Activated naive CD4-positive, alpha-beta T cell treated with anti-CD3 and anti-CD28 coated beads for 36 hours (primary cell): ENCODE measurements at regions of chr2 and their contacts with region 1.

Region 1: GRCh38 chr2:64036034-64036705 is 16.9 kb upstream of the VPS54 start:
- DNase-seq: peak; percentile 37
- H3K4me3 Mint-ChIP-seq: peak overlapping the region; percentile 25
- H3K27ac Mint-ChIP-seq: peak overlapping the region; percentile 70
- H3K4me1 Mint-ChIP-seq: peaks cover 50% of the 10 kb centered on the region
- H3K27me3 Mint-ChIP-seq: no peaks in the 10 kb centered on the region

Region 2: GRCh38 chr2:62306751-62307468 is 1729.3 kb before region 1 on chr2:
- CTCF ChIA-PET with region 1: no interaction called
- intact Hi-C with region 1: loop called (anchors 10 kb)
- DNase-seq: peak; percentile 73
- H3K4me3 Mint-ChIP-seq: no peak overlapping the region
- H3K27ac Mint-ChIP-seq: peak overlapping the region; percentile 90
- H3K4me1 Mint-ChIP-seq: peaks cover 74% of the 10 kb centered on the region
- H3K27me3 Mint-ChIP-seq: no peaks in the 10 kb centered on the region

Region 3: DNA sequence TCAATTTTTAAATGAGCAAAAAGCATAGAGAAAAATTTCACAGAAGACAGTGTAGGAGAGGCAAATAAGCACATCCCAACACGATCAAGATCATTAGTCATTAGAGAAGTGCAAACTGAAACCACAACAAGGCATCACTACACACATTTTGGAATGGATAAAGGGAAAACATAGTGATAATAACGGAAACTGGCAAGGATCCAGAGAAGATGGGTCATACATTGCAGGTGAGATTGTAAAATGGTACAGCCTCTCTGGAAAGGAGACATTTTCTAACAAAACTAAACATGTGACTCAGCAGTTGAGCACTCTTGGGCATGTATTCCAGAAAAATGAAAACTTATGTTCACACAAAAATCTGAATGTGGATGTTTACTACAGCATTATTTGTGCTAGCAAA is 1431.8 kb before region 1 on chr2:
- CTCF ChIA-PET with region 1: no interaction called
- intact Hi-C with region 1: no loop called
- DNase-seq: no peak
- H3K4me3 Mint-ChIP-seq: no peak overlapping the region
- H3K27ac Mint-ChIP-seq: no peak overlapping the region
- H3K4me1 Mint-ChIP-seq: no peaks in the 10 kb centered on the region
- H3K27me3 Mint-ChIP-seq: peaks cover 18% of the 10 kb centered on the region

Region 4: GRCh38 chr2:64000630-64001381 is 35.4 kb before region 1 on chr2:
- CTCF ChIA-PET with region 1: no interaction called
- intact Hi-C with region 1: no loop called
- DNase-seq: no peak
- H3K4me3 Mint-ChIP-seq: no peak overlapping the region
- H3K27ac Mint-ChIP-seq: no peak overlapping the region
- H3K4me1 Mint-ChIP-seq: peaks cover 16% of the 10 kb centered on the region
- H3K27me3 Mint-ChIP-seq: no peaks in the 10 kb centered on the region

Region 5: GRCh38 chr2:64018923-64019718 is 17.0 kb before region 1 on chr2 and contains the start of gene VPS54:
- CTCF ChIA-PET with region 1: interaction called, 3 read pairs
- intact Hi-C with region 1: loop called (anchors 1 kb)
- DNase-seq: peak; percentile 52
- H3K4me3 Mint-ChIP-seq: peak within 1 kb of the TSS; percentile 95
- H3K27ac Mint-ChIP-seq: peak within 1 kb of the TSS; percentile 95
- H3K4me1 Mint-ChIP-seq: peaks cover 34% of the 10 kb centered on the region
- H3K27me3 Mint-ChIP-seq: no peaks in the 10 kb centered on the region
- total RNA-seq, gene VPS54: 7.0 to 7.7 TPM

Region 6: DNA sequence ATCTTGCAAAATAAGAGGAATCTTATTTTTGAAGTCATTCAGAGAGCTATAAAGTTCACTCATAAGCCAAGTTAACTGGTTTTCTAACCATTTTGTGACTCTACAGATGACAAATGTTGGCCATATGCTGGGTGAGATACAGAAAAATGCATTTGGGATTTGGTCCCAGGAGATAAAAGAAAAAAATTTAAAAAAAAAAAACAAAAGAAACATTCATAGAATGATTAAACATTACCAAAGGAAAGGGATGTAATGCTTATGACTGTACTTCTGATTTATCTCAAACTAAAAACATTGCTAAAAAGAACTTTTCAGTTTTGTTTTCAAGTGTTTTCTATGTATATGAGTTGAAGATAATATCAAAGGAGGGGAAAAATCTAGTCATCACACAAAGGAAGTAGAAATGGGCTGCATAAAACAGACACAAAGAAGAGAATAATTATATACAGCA is 65.0 kb after region 1 on chr2:
- CTCF ChIA-PET with region 1: no interaction called
- intact Hi-C with region 1: loop called (anchors 1 kb)
- DNase-seq: no peak
- H3K4me3 Mint-ChIP-seq: no peak overlapping the region
- H3K27ac Mint-ChIP-seq: peak overlapping the region; percentile 76
- H3K4me1 Mint-ChIP-seq: peaks cover 51% of the 10 kb centered on the region
- H3K27me3 Mint-ChIP-seq: no peaks in the 10 kb centered on the region

Region 7: GRCh38 chr2:64133828-64134227 is 97.7 kb after region 1 on chr2:
- CTCF ChIA-PET with region 1: interaction called, 3 read pairs
- intact Hi-C with region 1: loop called (anchors 1 kb)
- DNase-seq: no peak
- H3K4me3 Mint-ChIP-seq: no peak overlapping the region
- H3K27ac Mint-ChIP-seq: peak overlapping the region; percentile 72
- H3K4me1 Mint-ChIP-seq: peaks cover 88% of the 10 kb centered on the region
- H3K27me3 Mint-ChIP-seq: no peaks in the 10 kb centered on the region

Region 8: GRCh38 chr2:64203858-64204632 is 167.9 kb after region 1 on chr2:
- CTCF ChIA-PET with region 1: no interaction called
- intact Hi-C with region 1: loop called (anchors 1 kb)
- DNase-seq: peak; percentile 75
- H3K4me3 Mint-ChIP-seq: peak overlapping the region; percentile 65
- H3K27ac Mint-ChIP-seq: peak overlapping the region; percentile 90
- H3K4me1 Mint-ChIP-seq: peaks cover 84% of the 10 kb centered on the region
- H3K27me3 Mint-ChIP-seq: no peaks in the 10 kb centered on the region

Region 9: GRCh38 chr2:64635976-64636911 is 600.1 kb after region 1 on chr2:
- CTCF ChIA-PET with region 1: no interaction called
- intact Hi-C with region 1: no loop called
- DNase-seq: no peak
- H3K4me3 Mint-ChIP-seq: peak overlapping the region; percentile 41
- H3K27ac Mint-ChIP-seq: peak overlapping the region; percentile 47
- H3K4me1 Mint-ChIP-seq: peaks cover 51% of the 10 kb centered on the region
- H3K27me3 Mint-ChIP-seq: no peaks in the 10 kb centered on the region

Region 10: GRCh38 chr2:64865073-64865830 is 829.1 kb after region 1 on chr2:
- CTCF ChIA-PET with region 1: no interaction called
- intact Hi-C with region 1: loop called (anchors 10 kb)
- DNase-seq: peak; percentile 59
- H3K4me3 Mint-ChIP-seq: peak overlapping the region; percentile 55
- H3K27ac Mint-ChIP-seq: no peak overlapping the region
- H3K4me1 Mint-ChIP-seq: no peaks in the 10 kb centered on the region
- H3K27me3 Mint-ChIP-seq: peaks cover 3% of the 10 kb centered on the region